ENCODE measurements at regions of chr1 and their contacts with region 1.

Region 1: GRCh38 chr1:112563341-112563740 is 54.6 kb downstream of the WNT2B start:
- DNase-seq: no peak
- ATAC-seq: no peak
- H3K4me3 ChIP-seq: no peak overlapping the region
- H3K27ac ChIP-seq: no peak overlapping the region
- H3K4me1 ChIP-seq: no peaks in the 10 kb centered on the region
- H3K27me3 ChIP-seq: no peaks in the 10 kb centered on the region
- CTCF ChIP-seq: no peak

Region 2: GRCh38 chr1:112501810-112502641 is 61.3 kb before region 1 on chr1:
- intact Hi-C with region 1: loop called in 1 of 10 experiments (anchors 10 kb)
- DNase-seq: peak; percentile 76 to 77
- ATAC-seq: peak; percentile 84 to 92 (median 90)
- H3K4me3 ChIP-seq: peak overlapping the region; percentile 35 to 73 (median 61)
- H3K27ac ChIP-seq: peak overlapping the region in 8 of 10 donors; percentile 14 to 79 (median 72)
- H3K4me1 ChIP-seq: peaks cover 0 to 27% (median 15%) of the 10 kb centered on the region in 9 donors
- H3K27me3 ChIP-seq: peaks cover 0 to 78% (median 4%) of the 10 kb centered on the region in 7 donors
- CTCF ChIP-seq: peak; percentile 62 to 84 (median 71)

Measured in heart right ventricle (tissue), 16 donors.